ENCODE measurements at regions of chr7 and their contacts with region 1.

Region 1: GRCh38 chr7:55964261-55965099 is at the start of gene NIPSNAP2:
- DNase-seq: peak; percentile 90 to 91
- ATAC-seq: peak; percentile 73 to 84 (median 82)
- H3K4me3 ChIP-seq: peak within 1 kb of the TSS; percentile 73
- H3K27ac ChIP-seq: peak within 1 kb of the TSS; percentile 89
- H3K4me1 ChIP-seq: peaks cover 35% of the 10 kb centered on the region
- H3K27me3 ChIP-seq: no peaks in the 10 kb centered on the region
- CTCF ChIP-seq: peak; percentile 83
- total RNA-seq, gene NIPSNAP2: 230 to 302 (median 270) TPM

Region 2: GRCh38 chr7:54758702-54759592 is 1205.5 kb before region 1 on chr7 and contains the start of gene SEC61G:
- intact Hi-C with region 1: loop called in 1 of 2 experiments (anchors 5 kb)
- DNase-seq: peak; percentile 97 to 99
- ATAC-seq: peak; percentile 97 to 99 (median 98)
- H3K4me3 ChIP-seq: peak within 1 kb of the TSS; percentile 99
- H3K27ac ChIP-seq: peak within 1 kb of the TSS; percentile 95
- H3K4me1 ChIP-seq: peaks cover 22% of the 10 kb centered on the region
- H3K27me3 ChIP-seq: no peaks in the 10 kb centered on the region
- CTCF ChIP-seq: no peak
- total RNA-seq, gene SEC61G: 44.1 to 67.8 (median 56.4) TPM

Region 3: GRCh38 chr7:55365675-55366460 is 598.6 kb before region 1 on chr7:
- intact Hi-C with region 1: loop called in 1 of 2 experiments (anchors 10 kb)
- DNase-seq: peak; percentile 97 to 98
- ATAC-seq: peak; percentile 97 to 98 (median 98)
- H3K4me3 ChIP-seq: peak overlapping the region; percentile 88
- H3K27ac ChIP-seq: peak overlapping the region; percentile 100
- H3K4me1 ChIP-seq: peaks cover 13% of the 10 kb centered on the region
- H3K27me3 ChIP-seq: no peaks in the 10 kb centered on the region
- CTCF ChIP-seq: peak; percentile 29

Region 4: DNA sequence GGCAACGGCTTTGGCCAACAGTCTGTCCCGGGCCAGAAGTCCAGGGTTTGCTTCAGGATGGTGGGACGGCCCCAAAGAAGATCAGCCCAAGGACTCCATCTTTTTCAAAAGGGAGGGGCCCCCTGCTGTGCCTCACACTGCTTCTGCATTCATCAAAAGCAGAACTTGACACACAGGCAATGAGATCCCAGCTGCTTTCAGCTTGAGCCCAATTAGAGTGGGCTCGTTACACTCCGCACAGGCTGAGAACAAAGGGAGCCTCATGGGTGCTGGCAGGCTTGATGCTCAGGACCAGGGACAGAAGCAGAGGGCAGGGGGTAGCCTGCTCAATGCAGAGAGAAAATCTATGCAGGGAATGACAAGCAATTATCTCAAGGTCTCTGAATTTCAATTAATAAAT is 437.7 kb before region 1 on chr7:
- intact Hi-C with region 1: no loop called
- DNase-seq: no peak
- ATAC-seq: peak; percentile 10 to 51 (median 34)
- H3K4me3 ChIP-seq: peak overlapping the region; percentile 3
- H3K27ac ChIP-seq: peak overlapping the region; percentile 58
- H3K4me1 ChIP-seq: peaks cover 62% of the 10 kb centered on the region
- H3K27me3 ChIP-seq: no peaks in the 10 kb centered on the region
- CTCF ChIP-seq: no peak

Region 5: DNA sequence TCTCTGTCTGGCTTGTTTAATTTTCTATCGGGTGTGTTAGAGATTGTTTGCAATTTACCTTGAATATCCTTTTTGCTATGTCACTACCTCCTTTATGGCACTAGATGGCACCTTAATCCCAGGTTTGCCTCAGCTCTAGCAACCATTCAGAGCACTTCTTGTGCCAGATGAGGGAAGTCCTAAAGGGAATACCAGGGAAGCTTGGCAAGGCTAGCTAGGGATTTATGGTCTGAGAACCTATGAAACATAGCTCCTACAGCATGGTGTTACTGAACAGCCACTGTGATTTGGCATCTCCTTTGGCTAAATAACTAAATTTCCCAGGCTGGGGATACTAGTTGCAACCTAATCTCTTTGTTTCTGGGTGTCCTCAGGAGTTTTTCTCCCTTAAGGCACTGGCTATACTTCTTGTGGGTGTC is 323.2 kb before region 1 on chr7:
- intact Hi-C with region 1: loop called (anchors 2 to 5 kb)
- DNase-seq: no peak
- ATAC-seq: peak; percentile 85 to 99 (median 98)
- H3K4me3 ChIP-seq: no peak overlapping the region
- H3K27ac ChIP-seq: no peak overlapping the region
- H3K4me1 ChIP-seq: no peaks in the 10 kb centered on the region
- H3K27me3 ChIP-seq: no peaks in the 10 kb centered on the region
- CTCF ChIP-seq: peak; percentile 80

Region 6: DNA sequence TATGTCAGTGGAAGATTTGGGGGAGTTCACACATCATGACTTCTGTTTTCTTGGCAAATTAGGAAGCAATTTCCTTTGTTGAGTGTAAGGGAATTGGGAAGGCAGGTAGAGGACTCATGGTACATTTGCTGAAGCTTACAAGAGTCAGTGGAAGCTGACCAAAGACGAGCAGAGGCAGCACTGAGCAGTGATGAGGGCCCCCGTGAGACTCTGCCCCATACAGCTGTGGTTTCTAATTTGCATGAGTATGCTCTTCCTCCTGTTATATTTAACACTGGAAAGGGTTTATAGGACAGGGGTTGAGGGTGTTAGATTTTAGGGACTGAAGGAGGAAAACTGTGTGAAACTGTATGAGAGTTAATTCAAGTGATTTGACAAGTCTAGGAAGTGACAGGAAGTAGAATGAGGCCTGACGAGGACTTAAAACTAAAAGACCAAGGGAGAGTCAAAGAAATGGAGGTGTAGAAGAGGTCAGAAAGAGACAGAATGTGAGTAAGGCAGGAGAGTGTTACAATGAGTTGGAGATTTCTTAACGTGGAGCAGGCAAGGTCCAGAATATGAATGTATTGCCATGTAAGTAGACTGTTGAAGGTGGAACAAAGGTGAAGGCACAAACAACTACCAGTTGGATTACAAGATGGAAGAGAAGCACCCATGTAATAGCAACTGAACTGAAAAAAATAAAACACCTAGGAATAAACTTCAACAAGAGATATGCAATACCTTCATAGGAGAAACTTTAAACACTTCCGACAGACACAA is 36.3 kb before region 1 on chr7:
- intact Hi-C with region 1: no loop called
- DNase-seq: no peak
- ATAC-seq: no peak
- H3K4me3 ChIP-seq: no peak overlapping the region
- H3K27ac ChIP-seq: no peak overlapping the region
- H3K4me1 ChIP-seq: no peaks in the 10 kb centered on the region
- H3K27me3 ChIP-seq: no peaks in the 10 kb centered on the region
- CTCF ChIP-seq: no peak

Region 7: DNA sequence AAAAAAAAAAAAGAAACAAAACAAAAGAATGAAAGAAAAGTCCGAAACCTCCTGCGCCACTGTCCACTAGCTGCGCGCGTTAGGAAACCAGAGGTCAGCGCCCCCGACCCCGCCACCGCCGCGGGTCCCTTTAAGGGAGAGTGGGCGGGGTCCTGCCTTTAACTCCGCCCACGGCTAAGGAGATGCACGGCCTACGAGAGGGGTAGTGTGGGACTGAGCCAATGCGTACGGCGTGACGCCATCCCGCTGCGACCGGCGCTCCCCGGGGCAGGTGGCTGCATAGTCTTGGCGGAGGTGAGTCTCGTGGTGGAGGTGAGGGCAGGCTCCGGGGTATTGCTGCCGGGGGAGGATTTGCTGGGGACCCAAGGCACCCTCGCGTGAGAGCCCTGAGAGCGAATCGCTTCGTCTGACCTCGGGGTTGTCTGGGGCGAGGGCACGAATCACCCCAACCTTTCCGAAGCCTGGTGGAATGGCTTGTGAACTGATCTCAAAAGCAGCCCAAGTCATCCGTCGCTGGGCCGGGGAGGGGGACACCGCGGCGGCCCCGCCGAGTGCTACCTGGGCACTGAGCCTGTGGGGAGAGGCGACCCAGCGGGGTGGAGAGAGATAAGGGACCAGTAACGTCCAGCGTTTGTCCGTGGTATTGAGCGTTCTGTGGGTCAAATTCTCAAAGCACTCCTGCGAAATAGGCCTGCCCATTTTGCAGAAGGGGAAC is 12.7 kb before region 1 on chr7 and contains the start of gene MRPS17:
- intact Hi-C with region 1: loop called in 1 of 2 experiments (anchors 1 kb)
- DNase-seq: peak; percentile 91 to 95
- ATAC-seq: peak; percentile 100
- H3K4me3 ChIP-seq: peak within 1 kb of the TSS; percentile 99
- H3K27ac ChIP-seq: peak within 1 kb of the TSS; percentile 94
- H3K4me1 ChIP-seq: peaks cover 7% of the 10 kb centered on the region
- H3K27me3 ChIP-seq: no peaks in the 10 kb centered on the region
- CTCF ChIP-seq: no peak
- total RNA-seq, gene MRPS17: 23.8 to 34.6 (median 26.5) TPM

Measured in psoas muscle (tissue), 8 donors.